Heart right ventricle (tissue), 16 donors: ENCODE measurements at regions of chr2 and their contacts with region 1.

Region 1: GRCh38 chr2:85561317-85561979 is at the start of gene GGCX:
- DNase-seq: peak; percentile 96 to 97
- ATAC-seq: peak; percentile 94 to 98 (median 96)
- H3K4me3 ChIP-seq: peak within 1 kb of the TSS; percentile 79 to 91 (median 85)
- H3K27ac ChIP-seq: peak within 1 kb of the TSS; percentile 60 to 97 (median 91)
- H3K4me1 ChIP-seq: peaks cover 0 to 36% (median 27%) of the 10 kb centered on the region in 9 donors
- H3K27me3 ChIP-seq: no peaks in the 10 kb centered on the region
- CTCF ChIP-seq: peak in 4 of 9 donors; percentile 14 to 47 (median 34)
- total RNA-seq, gene GGCX: 18.2 to 31.1 (median 21.6) TPM

Region 2: DNA sequence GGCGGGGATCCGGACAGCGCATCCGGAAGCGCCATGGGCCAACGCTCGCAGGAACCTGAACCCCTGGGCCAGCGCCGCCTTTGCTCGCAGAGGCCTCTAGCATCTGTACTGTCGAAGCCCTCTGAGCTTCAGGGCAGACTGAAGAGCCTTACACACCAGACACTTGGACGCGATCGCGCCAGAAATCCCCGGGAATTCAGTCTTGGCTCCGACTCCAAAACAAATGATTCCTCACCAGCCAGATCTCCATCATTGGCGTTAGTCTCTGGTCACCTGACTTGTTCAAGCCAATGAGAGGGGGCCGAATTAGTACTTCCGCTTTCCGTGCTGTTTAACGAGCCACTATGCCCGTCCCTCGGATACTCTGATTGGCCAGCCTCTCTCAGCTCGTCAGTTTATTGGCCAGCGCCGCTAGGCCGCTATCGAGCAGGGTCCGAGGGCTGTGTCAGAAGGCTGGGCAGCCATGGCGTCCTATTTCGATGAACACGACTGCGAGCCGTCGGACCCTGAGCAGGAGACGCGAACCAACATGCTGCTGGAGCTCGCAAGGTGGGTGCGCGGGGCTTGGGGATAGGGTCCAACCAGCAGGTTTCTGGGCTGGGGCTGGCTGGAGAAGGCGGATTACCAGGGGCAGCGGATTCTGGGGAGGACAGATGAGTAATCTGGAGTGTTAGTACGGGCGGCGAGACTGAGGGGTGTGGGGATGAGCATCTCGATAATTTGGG is 34.0 kb after region 1 on chr2 and contains the start of gene RNF181:
- intact Hi-C with region 1: loop called in 6 of 10 experiments (anchors 5 kb)
- DNase-seq: peak; percentile 89 to 98
- ATAC-seq: peak; percentile 92 to 97 (median 97)
- H3K4me3 ChIP-seq: peak within 1 kb of the TSS; percentile 50 to 91 (median 74)
- H3K27ac ChIP-seq: peak within 1 kb of the TSS; percentile 76 to 95 (median 91)
- H3K4me1 ChIP-seq: peaks cover 5 to 54% (median 43%) of the 10 kb centered on the region in 9 donors
- H3K27me3 ChIP-seq: no peaks in the 10 kb centered on the region
- CTCF ChIP-seq: no peak
- total RNA-seq, gene RNF181: 74.7 to 117 (median 82.2) TPM

Region 3: DNA sequence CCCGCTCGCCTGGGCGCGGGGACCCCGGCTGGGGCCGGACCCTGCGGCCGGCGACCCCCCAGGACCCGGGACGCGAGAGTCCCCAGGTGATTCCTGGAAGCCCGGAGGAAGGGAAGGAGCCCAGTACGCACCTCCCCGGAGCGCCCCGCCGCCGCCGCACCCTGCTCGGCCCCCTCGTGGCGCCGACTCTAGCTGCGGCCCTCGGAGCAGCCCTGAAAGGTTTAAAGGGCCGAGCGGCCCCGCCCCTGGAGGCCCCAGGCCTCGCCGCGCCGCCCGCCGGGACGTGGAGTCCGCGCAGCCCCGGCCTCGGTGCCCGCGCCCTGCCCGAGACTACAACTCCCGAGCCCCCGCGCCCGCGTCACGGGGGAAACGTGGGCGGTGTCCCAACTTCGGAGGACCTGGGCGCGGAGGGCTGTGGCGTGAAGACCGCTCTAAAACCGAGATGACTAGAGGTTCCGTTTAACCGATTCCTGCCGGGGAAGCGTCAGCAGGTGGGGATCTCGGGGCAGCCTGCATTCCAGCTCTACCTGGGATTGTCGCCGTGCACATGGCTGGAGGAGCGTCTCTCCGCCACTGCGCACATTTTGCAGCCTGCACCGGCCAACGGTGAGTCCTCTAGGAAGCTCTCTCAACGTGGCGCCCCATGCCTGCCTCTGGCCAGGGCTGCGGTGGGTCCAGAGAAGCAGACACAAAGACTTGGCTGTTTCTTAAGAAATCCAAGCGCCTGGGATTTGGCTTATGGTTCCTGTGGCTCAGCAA is 41.2 kb after region 1 on chr2 and contains the start of gene TMEM150A:
- intact Hi-C with region 1: loop called in 7 of 10 experiments (anchors 2 to 5 kb)
- DNase-seq: peak; percentile 94 to 95
- ATAC-seq: peak; percentile 92 to 97 (median 94)
- H3K4me3 ChIP-seq: peak within 1 kb of the TSS; percentile 64 to 92 (median 75)
- H3K27ac ChIP-seq: peak within 1 kb of the TSS; percentile 71 to 94 (median 88)
- H3K4me1 ChIP-seq: peaks cover 6 to 61% (median 55%) of the 10 kb centered on the region in 9 donors
- H3K27me3 ChIP-seq: no peaks in the 10 kb centered on the region
- CTCF ChIP-seq: peak; percentile 11 to 68 (median 44)
- total RNA-seq, gene TMEM150A: 7.6 to 13.9 (median 9.6) TPM

Region 4: DNA sequence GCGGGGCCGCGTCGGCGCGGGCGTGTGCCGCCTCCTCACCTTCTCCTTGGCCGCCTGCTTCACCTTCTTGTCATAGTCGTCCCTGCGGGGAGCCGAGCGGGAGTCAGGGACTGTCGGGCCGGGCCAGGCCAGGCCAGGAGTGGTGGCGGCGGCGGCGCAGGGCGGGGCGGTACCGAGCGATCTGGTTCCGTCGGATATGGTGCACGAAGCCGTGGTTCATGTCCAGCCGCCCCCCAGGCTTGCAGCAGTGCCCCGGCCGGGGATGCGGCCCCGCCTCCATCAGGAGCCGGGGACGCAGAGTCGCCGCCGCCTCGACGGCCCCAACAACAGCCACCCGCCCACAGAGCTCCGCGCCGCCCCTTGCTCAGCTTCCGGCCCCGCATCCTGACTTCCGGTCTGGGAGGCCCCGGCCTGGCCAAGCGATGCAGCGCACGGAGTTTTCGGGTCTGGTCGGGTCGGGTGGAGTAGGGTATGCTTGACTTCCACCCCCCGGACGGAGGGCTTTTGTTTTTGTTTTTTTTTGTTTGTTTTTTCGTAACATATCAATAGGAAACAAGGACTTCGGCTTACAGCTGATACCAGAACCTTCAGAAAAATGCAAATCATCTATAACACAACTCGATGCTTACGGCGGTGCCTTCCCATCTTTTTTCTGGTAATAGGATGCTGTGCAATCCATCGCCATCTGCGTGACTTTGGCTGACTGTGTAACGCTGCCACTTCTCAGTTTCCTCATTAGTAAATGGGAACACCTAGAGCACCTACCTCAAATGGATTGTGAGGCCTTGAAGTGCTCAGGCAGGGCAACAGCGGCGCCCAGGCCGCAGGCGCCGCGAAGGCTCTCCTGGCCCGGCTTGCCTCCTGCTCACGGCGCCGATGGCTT is 50.5 kb after region 1 on chr2 and contains the start of gene C2orf68:
- intact Hi-C with region 1: loop called in 3 of 10 experiments (anchors 2 to 10 kb)
- DNase-seq: peak; percentile 93
- ATAC-seq: peak; percentile 86 to 88 (median 88)
- H3K4me3 ChIP-seq: peak within 1 kb of the TSS; percentile 69 to 98 (median 88)
- H3K27ac ChIP-seq: peak within 1 kb of the TSS; percentile 57 to 94 (median 90)
- H3K4me1 ChIP-seq: peaks cover 5 to 63% (median 33%) of the 10 kb centered on the region in 9 donors
- H3K27me3 ChIP-seq: no peaks in the 10 kb centered on the region
- CTCF ChIP-seq: peak in 1 of 9 donors; percentile 11
- total RNA-seq, gene C2orf68: 25.0 to 39.0 (median 33.7) TPM